ENCODE measurements at regions of chr17 and their contacts with region 1.

Region 1: GRCh38 chr17:77049440-77049839 is 91.3 kb upstream of the SEC14L1 start:
- DNase-seq: no peak
- H3K4me3 ChIP-seq: no peak overlapping the region
- H3K27ac ChIP-seq: no peak overlapping the region
- H3K4me1 ChIP-seq: peaks cover 20% of the 10 kb centered on the region
- H3K27me3 ChIP-seq: no peaks in the 10 kb centered on the region
- CTCF ChIP-seq: no peak

Region 2: DNA sequence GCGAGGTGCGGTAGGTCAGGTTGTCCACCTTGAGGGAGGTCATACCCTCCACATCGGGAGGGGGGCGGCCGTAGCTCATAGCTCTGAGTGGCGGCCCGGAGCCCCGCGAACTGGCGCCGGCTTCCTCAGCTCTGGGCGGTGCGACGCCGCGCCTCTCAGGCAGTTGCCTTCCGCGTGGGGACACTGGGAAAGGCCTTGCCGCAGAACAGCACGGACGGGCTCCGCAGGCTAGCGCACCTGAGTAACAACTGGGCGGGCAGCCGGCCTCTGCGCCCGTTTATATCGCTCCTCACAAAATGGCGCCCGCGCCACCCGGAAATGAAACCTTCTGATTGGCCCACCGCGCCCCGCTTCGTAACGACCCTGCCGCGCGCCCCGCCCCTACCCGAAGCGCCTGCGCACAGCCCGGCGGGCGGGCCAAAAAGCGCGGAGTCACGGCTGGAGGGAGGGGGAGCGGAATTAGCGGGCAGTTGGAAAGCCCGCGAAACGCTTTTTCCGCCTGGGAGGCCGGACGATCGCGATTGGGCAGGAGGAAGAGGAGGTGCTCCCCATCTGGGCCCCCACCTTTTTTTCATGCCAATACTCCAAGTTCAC is 312.3 kb before region 1 on chr17 and contains the start of gene SRSF2:
- CTCF ChIA-PET with region 1: no interaction called
- dilution Hi-C with region 1: loop called (anchors 5 kb)
- in situ Hi-C with region 1: no loop called
- intact Hi-C with region 1: no loop called
- DNase-seq: peak; percentile 99
- H3K4me3 ChIP-seq: peak within 1 kb of the TSS; percentile 98 to 100 (median 99)
- H3K27ac ChIP-seq: peak within 1 kb of the TSS; percentile 94
- H3K4me1 ChIP-seq: peaks cover 25% of the 10 kb centered on the region
- H3K27me3 ChIP-seq: no peaks in the 10 kb centered on the region
- CTCF ChIP-seq: no peak
- total RNA-seq, gene SRSF2: 110 to 196 TPM

Region 3: DNA sequence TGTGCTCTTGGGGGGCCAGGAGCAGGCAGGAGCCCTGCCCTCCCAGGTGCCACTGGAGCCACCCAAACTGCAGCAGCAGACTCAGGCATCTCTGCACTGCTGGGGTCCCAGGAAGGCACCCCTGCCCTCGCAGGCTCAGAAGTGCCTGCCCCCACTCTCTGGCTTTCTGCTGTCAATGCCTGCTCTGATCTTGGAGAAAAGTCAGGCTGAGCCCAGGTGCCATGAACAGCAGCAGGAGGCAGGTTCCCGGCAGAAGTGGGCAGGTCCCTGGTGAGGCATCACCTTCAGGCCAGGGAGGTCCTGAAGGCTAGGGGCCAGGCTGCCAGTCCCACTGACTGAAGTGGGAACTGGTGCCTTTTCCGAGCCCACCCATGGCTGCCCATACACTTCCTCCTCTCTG is 74.7 kb before region 1 on chr17:
- CTCF ChIA-PET with region 1: no interaction called
- dilution Hi-C with region 1: loop called (anchors 5 kb)
- in situ Hi-C with region 1: no loop called
- intact Hi-C with region 1: no loop called
- DNase-seq: no peak
- H3K4me3 ChIP-seq: no peak overlapping the region
- H3K27ac ChIP-seq: no peak overlapping the region
- H3K4me1 ChIP-seq: no peaks in the 10 kb centered on the region
- H3K27me3 ChIP-seq: peaks cover 3% of the 10 kb centered on the region
- CTCF ChIP-seq: no peak

Region 4: GRCh38 chr17:77036807-77037381 is 12.5 kb before region 1 on chr17:
- CTCF ChIA-PET with region 1: interaction called, 12 read pairs
- dilution Hi-C with region 1: no loop called
- in situ Hi-C with region 1: no loop called
- intact Hi-C with region 1: no loop called
- DNase-seq: peak; percentile 55
- H3K4me3 ChIP-seq: no peak overlapping the region
- H3K27ac ChIP-seq: no peak overlapping the region
- H3K4me1 ChIP-seq: no peaks in the 10 kb centered on the region
- H3K27me3 ChIP-seq: peaks cover 4% of the 10 kb centered on the region
- CTCF ChIP-seq: peak; percentile 9 to 39